Pancreas (tissue), 10 donors: ENCODE measurements at regions of chr3 and their contacts with region 1.

Region 1: GRCh38 chr3:52144034-52144795 is 10.0 kb downstream of the POC1A start:
- DNase-seq: peak; percentile 73 to 89 (median 84)
- ATAC-seq: peak; percentile 90 to 99 (median 96)
- H3K4me3 ChIP-seq: no peak overlapping the region
- H3K27ac ChIP-seq: no peak overlapping the region
- H3K4me1 ChIP-seq: no peaks in the 10 kb centered on the region
- H3K27me3 ChIP-seq: no peaks in the 10 kb centered on the region
- CTCF ChIP-seq: peak; percentile 87 to 93 (median 92)

Region 2: GRCh38 chr3:51916418-51916817 is 227.8 kb before region 1 on chr3:
- intact Hi-C with region 1: no loop called
- DNase-seq: no peak
- ATAC-seq: no peak
- H3K4me3 ChIP-seq: no peak overlapping the region
- H3K27ac ChIP-seq: no peak overlapping the region
- H3K4me1 ChIP-seq: no peaks in the 10 kb centered on the region
- H3K27me3 ChIP-seq: no peaks in the 10 kb centered on the region
- CTCF ChIP-seq: no peak

Region 3: GRCh38 chr3:52001443-52001974 is 142.7 kb before region 1 on chr3:
- intact Hi-C with region 1: loop called in 2 of 3 experiments (anchors 5 kb)
- DNase-seq: peak; percentile 58 to 87 (median 75)
- ATAC-seq: peak; percentile 50 to 80 (median 79)
- H3K4me3 ChIP-seq: no peak overlapping the region
- H3K27ac ChIP-seq: no peak overlapping the region
- H3K4me1 ChIP-seq: peaks cover 4 to 11% (median 6%) of the 10 kb centered on the region in 3 donors
- H3K27me3 ChIP-seq: no peaks in the 10 kb centered on the region
- CTCF ChIP-seq: peak; percentile 79 to 83 (median 81)

Region 4: DNA sequence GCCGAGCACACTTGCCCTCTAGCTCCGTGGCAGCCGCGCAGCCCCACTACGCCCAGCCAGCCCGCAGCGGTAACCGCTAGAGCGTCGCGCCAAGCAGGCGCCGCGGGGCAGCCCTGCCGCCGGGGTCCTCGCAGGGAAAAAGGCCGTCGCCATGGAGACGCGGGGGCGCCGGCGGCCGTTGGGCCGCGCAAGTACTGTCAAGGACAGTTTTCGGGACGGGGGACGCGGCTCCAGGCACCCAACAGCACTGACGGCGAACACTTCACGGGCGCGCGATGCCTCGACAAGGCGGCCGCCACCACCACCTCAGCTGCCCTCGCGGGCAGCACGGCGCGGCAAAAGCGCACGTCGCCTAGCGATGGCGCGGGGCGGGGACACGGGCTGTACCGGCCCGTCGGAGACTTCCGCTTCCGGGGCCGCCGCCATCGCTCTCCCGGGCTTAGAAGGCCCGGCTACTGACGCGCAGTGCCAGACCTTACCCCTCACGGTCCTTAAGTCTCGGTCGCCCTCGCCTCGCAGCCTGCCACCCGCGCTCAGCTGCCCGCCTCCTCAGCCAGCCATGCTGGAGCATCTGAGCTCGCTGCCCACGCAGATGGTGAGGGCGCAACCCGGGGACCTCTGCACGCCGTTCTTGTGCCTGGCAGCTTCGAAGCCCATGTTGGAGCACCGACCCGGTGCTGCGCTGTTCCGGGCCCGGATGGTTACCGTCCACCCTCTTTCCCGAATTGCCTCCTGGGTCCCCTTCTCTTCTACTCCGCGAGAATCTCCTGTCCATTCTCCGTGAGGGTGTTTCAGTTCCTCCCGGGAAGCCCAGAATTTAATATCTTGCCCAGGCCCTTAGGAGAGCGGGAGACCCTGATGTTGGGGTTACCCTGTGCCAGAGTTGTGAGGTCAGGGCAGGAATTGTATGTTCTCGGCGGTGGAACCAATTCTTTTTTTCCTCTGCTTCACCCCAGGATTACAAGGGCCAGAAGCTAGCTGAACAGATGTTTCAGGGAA is 561.8 kb after region 1 on chr3 and contains the starts of genes GLT8D1 and SPCS1:
- intact Hi-C with region 1: no loop called
- DNase-seq: peak; percentile 79 to 93 (median 84)
- ATAC-seq: peak; percentile 91 to 97 (median 92)
- H3K4me3 ChIP-seq: peak within 1 kb of the TSS; percentile 67 to 98 (median 98)
- H3K27ac ChIP-seq: peak within 1 kb of the TSS; percentile 74 to 83 (median 79)
- H3K4me1 ChIP-seq: peaks cover 11 to 23% (median 15%) of the 10 kb centered on the region in 3 donors
- H3K27me3 ChIP-seq: no peaks in the 10 kb centered on the region
- CTCF ChIP-seq: no peak
- total RNA-seq, gene GLT8D1: 19.0 to 35.0 (median 21.0) TPM
- total RNA-seq, gene SPCS1: 54.9 to 87.1 (median 58.7) TPM